Calu3 (cell line): ENCODE measurements at regions of chr10 and their contacts with region 1.

Region 1: GRCh38 chr10:72048450-72049124 is 39.8 kb downstream of the SPOCK2 start:
- DNase-seq: peak; percentile 95
- H3K4me3 Mint-ChIP-seq: no peak overlapping the region
- H3K27ac Mint-ChIP-seq: peak overlapping the region; percentile 13
- H3K4me1 Mint-ChIP-seq: no peaks in the 10 kb centered on the region
- H3K27me3 Mint-ChIP-seq: no peaks in the 10 kb centered on the region
- CTCF ChIP-seq: peak; percentile 97

Region 2: GRCh38 chr10:71899665-71900412 is 148.7 kb before region 1 on chr10:
- CTCF ChIA-PET with region 1: interaction called, 82 read pairs
- intact Hi-C with region 1: loop called (anchors 1 kb)
- DNase-seq: no peak
- H3K4me3 Mint-ChIP-seq: no peak overlapping the region
- H3K27ac Mint-ChIP-seq: no peak overlapping the region
- H3K4me1 Mint-ChIP-seq: peaks cover 8% of the 10 kb centered on the region
- H3K27me3 Mint-ChIP-seq: no peaks in the 10 kb centered on the region
- CTCF ChIP-seq: no peak

Region 3: GRCh38 chr10:71963756-71964668 is 84.6 kb before region 1 on chr10 and contains the start of gene CHST3:
- CTCF ChIA-PET with region 1: interaction called, 13 read pairs
- intact Hi-C with region 1: loop called (anchors 2 kb)
- DNase-seq: peak; percentile 61
- H3K4me3 Mint-ChIP-seq: peak within 1 kb of the TSS; percentile 95
- H3K27ac Mint-ChIP-seq: peak within 1 kb of the TSS; percentile 30
- H3K4me1 Mint-ChIP-seq: peaks cover 43% of the 10 kb centered on the region
- H3K27me3 Mint-ChIP-seq: peaks cover 18% of the 10 kb centered on the region
- CTCF ChIP-seq: no peak
- total RNA-seq, gene CHST3: 14.3 and 32.4 TPM in 2 replicates

Region 4: GRCh38 chr10:72097448-72098300 is 49.1 kb after region 1 on chr10:
- CTCF ChIA-PET with region 1: interaction called, 8 read pairs
- intact Hi-C with region 1: loop called (anchors 5 kb)
- DNase-seq: peak; percentile 81
- H3K4me3 Mint-ChIP-seq: peak overlapping the region; percentile 44
- H3K27ac Mint-ChIP-seq: peak overlapping the region; percentile 97
- H3K4me1 Mint-ChIP-seq: peaks cover 65% of the 10 kb centered on the region
- H3K27me3 Mint-ChIP-seq: no peaks in the 10 kb centered on the region
- CTCF ChIP-seq: no peak

Region 5: GRCh38 chr10:72223743-72224101 is 175.1 kb after region 1 on chr10:
- CTCF ChIA-PET with region 1: interaction called, 5 read pairs
- intact Hi-C with region 1: loop called (anchors 1 kb)
- DNase-seq: no peak
- H3K4me3 Mint-ChIP-seq: no peak overlapping the region
- H3K27ac Mint-ChIP-seq: peak overlapping the region; percentile 63
- H3K4me1 Mint-ChIP-seq: peaks cover 23% of the 10 kb centered on the region
- H3K27me3 Mint-ChIP-seq: no peaks in the 10 kb centered on the region
- CTCF ChIP-seq: no peak